ENCODE measurements at regions of chr3 and their contacts with region 1.

Region 1: GRCh38 chr3:150721285-150722130 is 17.8 kb upstream of the ERICH6 start:
- DNase-seq: no peak
- H3K4me3 Mint-ChIP-seq: no peak overlapping the region
- H3K27ac Mint-ChIP-seq: no peak overlapping the region
- H3K4me1 Mint-ChIP-seq: peaks cover 28% of the 10 kb centered on the region
- H3K27me3 Mint-ChIP-seq: no peaks in the 10 kb centered on the region

Region 2: DNA sequence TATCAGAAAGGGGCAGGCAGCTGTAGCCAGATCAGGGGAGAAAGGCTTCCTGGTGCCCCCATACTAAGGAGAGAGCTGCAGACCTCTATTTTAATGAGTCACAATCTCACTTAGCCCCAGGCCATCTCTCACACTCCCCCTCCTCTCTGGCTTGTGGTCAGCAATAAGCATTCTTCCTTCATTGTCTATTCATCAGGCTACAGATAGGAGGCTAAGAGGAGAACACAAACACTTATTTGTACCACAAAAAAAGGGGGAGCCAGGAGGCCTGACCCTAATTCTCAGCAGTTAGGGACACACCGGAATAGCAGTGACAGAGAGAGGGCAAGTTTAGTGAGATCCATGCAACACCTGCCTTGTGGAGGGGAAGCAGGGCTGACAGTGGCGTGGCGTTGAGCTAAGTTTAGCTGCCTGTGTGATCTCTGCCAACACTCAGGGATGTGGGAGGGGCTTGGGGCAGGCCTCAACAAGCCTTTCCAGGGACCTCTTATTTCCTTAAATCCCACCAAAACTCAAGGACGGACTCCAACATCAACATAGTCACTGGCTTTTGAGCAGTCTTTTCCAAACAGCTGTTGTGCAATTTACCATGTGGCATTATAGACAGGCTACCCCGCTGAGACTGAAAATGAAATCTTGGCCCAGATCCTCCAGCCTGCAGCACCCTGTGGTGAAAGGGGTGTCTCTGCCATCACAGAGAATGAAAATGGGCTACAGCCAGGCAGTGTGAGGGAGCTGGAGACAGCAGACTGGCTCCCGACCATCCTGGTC is 505.3 kb before region 1 on chr3:
- CTCF ChIA-PET with region 1: no interaction called
- intact Hi-C with region 1: no loop called
- DNase-seq: no peak
- H3K4me3 Mint-ChIP-seq: no peak overlapping the region
- H3K27ac Mint-ChIP-seq: no peak overlapping the region
- H3K4me1 Mint-ChIP-seq: peaks cover 1% of the 10 kb centered on the region
- H3K27me3 Mint-ChIP-seq: peaks cover 12% of the 10 kb centered on the region

Region 3: GRCh38 chr3:150515210-150515609 is 206.3 kb before region 1 on chr3:
- CTCF ChIA-PET with region 1: no interaction called
- intact Hi-C with region 1: no loop called
- DNase-seq: no peak
- H3K4me3 Mint-ChIP-seq: no peak overlapping the region
- H3K27ac Mint-ChIP-seq: no peak overlapping the region
- H3K4me1 Mint-ChIP-seq: no peaks in the 10 kb centered on the region
- H3K27me3 Mint-ChIP-seq: no peaks in the 10 kb centered on the region

Region 4: GRCh38 chr3:150546226-150547044 is 175.1 kb before region 1 on chr3 and contains the starts of genes EIF2A and SERP1:
- CTCF ChIA-PET with region 1: no interaction called
- intact Hi-C with region 1: loop called (anchors 1 kb)
- DNase-seq: peak; percentile 99
- H3K4me3 Mint-ChIP-seq: peak within 1 kb of the TSS; percentile 97
- H3K27ac Mint-ChIP-seq: peak within 1 kb of the TSS; percentile 95
- H3K4me1 Mint-ChIP-seq: peaks cover 69% of the 10 kb centered on the region
- H3K27me3 Mint-ChIP-seq: no peaks in the 10 kb centered on the region
- total RNA-seq, gene EIF2A: 133 to 135 TPM
- total RNA-seq, gene SERP1: 95.9 to 105 TPM

Region 5: GRCh38 chr3:150751753-150752263 is 30.3 kb after region 1 on chr3:
- CTCF ChIA-PET with region 1: interaction called, 10 read pairs
- intact Hi-C with region 1: no loop called
- DNase-seq: no peak
- H3K4me3 Mint-ChIP-seq: no peak overlapping the region
- H3K27ac Mint-ChIP-seq: peak overlapping the region; percentile 56
- H3K4me1 Mint-ChIP-seq: peaks cover 84% of the 10 kb centered on the region
- H3K27me3 Mint-ChIP-seq: no peaks in the 10 kb centered on the region

Region 6: DNA sequence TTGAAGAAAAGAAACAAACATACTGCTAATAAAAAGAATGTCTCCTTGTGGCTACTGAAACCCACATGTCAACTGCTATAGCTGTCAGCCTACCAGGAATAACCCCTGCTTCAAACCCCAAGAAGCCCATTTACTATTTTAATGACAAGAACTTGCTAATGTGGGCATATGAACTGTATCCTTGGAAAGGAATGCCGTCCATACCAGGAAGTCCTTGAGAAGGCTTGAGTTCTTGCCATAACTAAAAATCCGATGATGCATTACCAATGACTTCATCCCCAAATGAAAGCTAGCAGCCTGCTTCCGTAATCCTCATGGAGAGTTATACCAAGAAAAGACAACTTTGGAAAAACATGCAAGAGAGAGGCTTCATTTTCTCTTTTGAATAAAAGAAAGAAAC is 148.9 kb after region 1 on chr3:
- CTCF ChIA-PET with region 1: interaction called, 37 read pairs
- intact Hi-C with region 1: loop called (anchors 1 kb)
- DNase-seq: no peak
- H3K4me3 Mint-ChIP-seq: no peak overlapping the region
- H3K27ac Mint-ChIP-seq: no peak overlapping the region
- H3K4me1 Mint-ChIP-seq: no peaks in the 10 kb centered on the region
- H3K27me3 Mint-ChIP-seq: peaks cover 6% of the 10 kb centered on the region

Measured in activated naive CD4-positive, alpha-beta T cell treated with anti-CD3 and anti-CD28 coated beads for 36 hours (primary cell).